ENCODE measurements at regions of chr1 and their contacts with region 1.

Region 1: DNA sequence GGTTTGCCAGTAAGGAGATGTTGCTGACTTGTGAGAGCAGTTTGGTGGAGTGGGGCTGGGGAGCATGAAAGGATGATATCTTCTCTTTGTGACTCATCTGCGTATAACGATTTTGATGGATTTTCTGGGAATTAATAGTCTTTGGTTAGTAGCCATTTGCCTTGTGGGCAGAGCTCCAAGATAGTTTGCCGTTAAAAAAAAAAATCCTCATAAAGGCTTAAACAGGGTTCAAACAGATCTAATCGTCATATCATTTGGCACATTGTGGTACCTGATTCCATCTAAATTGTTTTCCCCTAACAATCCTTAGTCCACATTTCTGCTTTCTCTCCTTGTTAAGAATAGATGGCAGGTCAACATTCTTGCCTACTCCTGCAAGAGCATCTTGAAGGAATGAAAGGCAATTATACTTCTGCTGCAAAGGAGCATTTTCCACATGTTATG is 168.0 kb downstream of the PPP1R12B start:
- DNase-seq: no peak
- ATAC-seq: no peak
- H3K4me3 ChIP-seq: no peak overlapping the region
- H3K27ac ChIP-seq: peak overlapping the region in 1 of 12 donors; percentile 47
- H3K4me1 ChIP-seq: peaks cover 0 to 58% (median 21%) of the 10 kb centered on the region in 12 donors
- H3K27me3 ChIP-seq: peaks cover 0 to 4% (median 0%) of the 10 kb centered on the region in 9 donors
- CTCF ChIP-seq: no peak
- POLR2A ChIP-seq: no peak

Region 2: GRCh38 chr1:202565890-202566602 is 49.6 kb after region 1 on chr1:
- intact Hi-C with region 1: loop called in 3 of 10 experiments (anchors 10 kb)
- DNase-seq: no peak
- ATAC-seq: peak in 2 of 4 donors; percentile 9 to 23
- H3K4me3 ChIP-seq: no peak overlapping the region
- H3K27ac ChIP-seq: peak overlapping the region; percentile 12 to 78 (median 36)
- H3K4me1 ChIP-seq: peaks cover 0 to 90% (median 48%) of the 10 kb centered on the region in 12 donors
- H3K27me3 ChIP-seq: no peaks in the 10 kb centered on the region
- CTCF ChIP-seq: no peak
- POLR2A ChIP-seq: no peak

Region 3: GRCh38 chr1:202571347-202572339 is 55.2 kb after region 1 on chr1:
- intact Hi-C with region 1: loop called in 3 of 10 experiments (anchors 10 kb)
- DNase-seq: no peak
- ATAC-seq: no peak
- H3K4me3 ChIP-seq: no peak overlapping the region
- H3K27ac ChIP-seq: peak overlapping the region in 2 of 12 donors; percentile 27 to 78
- H3K4me1 ChIP-seq: peaks cover 0 to 81% (median 28%) of the 10 kb centered on the region in 12 donors
- H3K27me3 ChIP-seq: no peaks in the 10 kb centered on the region
- CTCF ChIP-seq: peak; percentile 54 to 85 (median 71)
- POLR2A ChIP-seq: no peak